ENCODE measurements at regions of chr20 and their contacts with region 1.

Region 1: DNA sequence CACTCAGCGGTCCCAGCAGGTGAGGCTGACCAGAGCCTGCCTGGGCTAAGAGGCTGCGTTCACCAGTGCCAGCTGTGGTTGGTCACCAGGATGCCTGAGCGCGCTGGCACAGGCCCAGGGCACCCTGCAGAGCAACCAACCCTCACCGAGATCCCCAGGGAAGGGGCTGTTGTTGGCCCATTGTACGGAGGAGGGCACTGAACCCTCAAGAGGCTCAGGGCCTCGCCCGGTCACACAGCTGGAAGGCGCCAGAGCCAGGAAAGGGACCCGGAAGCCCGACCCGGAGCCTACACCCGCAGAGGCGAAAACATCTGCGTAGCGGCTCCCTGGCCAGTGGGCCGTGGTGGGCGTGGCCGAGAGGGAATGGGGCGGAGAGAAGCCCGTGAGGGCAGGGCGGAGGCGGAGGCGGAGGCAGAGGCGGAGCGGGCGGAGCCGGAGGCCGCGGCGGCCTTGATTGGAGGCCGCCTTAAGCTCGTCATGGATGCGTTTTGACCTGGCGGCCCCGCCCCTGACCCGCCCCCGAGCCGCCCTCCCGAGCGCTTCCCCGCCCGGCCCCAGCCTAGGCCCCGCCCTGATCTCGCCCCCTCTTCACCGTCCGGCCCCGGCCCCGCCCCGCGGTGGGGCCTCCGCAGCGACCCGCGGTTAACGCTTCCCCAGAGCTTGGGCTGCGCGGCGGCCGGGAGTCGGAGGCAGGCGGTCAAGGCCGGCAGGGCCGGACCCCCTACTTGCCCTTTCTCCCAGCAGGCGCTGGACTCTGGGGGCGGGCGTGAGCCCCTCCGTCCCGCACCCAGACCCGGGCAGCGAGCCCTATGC is 2.2 kb upstream of the MRGBP start:
- DNase-seq: peak; percentile 91 to 99 (median 94)
- H3K4me3 ChIP-seq: peak overlapping the region; percentile 39 to 97 (median 76)
- H3K27ac ChIP-seq: peak overlapping the region; percentile 63 to 98 (median 95)
- H3K27me3 ChIP-seq: no peaks in the 10 kb centered on the region
- CTCF ChIP-seq: peak in 28 of 56 donors; percentile 4 to 62 (median 26)

Region 2: GRCh38 chr20:62065669-62066338 is 728.3 kb before region 1 on chr20 and contains the start of gene TAF4:
- intact Hi-C with region 1: loop called in 1 of 2 experiments (anchors 10 kb)
- DNase-seq: peak in 9 of 10 donors; percentile 44 to 81 (median 75)
- H3K4me3 ChIP-seq: peak within 1 kb of the TSS; percentile 47 to 86 (median 72)
- H3K27ac ChIP-seq: peak within 1 kb of the TSS in 58 of 59 donors; percentile 33 to 94 (median 85)
- H3K27me3 ChIP-seq: no peaks in the 10 kb centered on the region
- CTCF ChIP-seq: no peak
- total RNA-seq, gene TAF4: 13.3 to 38.0 (median 22.2) TPM

Region 3: DNA sequence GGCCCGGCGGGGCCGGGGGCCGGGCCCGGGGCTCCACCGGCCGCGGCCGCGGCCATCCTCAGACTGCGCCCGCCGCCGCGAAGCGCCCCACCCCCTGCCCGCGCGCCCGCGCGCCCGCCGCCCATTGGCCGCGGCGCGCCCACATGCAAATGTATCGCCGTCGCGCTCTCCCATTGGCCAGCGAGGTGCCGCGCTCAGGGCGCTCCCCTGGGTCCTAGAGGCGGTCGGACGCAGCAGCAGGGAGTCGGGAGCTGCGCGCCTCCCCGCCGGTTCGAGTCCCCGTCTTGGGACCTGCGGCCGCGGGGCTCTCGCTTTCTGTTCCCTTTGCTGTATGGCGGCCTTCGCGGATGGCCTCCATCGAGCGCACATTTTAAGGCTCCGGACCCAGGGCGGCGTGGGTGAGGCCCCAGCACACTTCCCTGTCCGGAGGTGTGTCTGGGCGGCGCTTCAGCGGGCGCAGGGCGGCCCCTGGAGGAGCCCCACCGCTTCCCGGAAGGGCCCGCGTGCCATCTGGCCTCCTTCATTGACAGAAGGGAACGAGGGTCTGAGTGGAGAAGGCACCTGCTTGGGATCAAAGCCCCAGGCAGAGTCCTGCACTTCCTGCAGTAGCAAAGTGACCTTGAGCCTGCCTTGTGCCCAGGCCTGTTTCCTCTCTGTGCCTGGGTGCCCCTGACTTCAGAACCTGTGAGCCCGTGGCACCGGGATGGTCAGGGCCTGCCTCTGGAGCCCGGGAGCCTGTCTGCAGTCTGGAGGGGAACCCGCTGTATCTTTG is 386.7 kb before region 1 on chr20 and contains the start of gene CABLES2:
- intact Hi-C with region 1: loop called (anchors 5 kb)
- DNase-seq: peak; percentile 91 to 97 (median 94)
- H3K4me3 ChIP-seq: peak within 1 kb of the TSS; percentile 52 to 85 (median 71)
- H3K27ac ChIP-seq: peak within 1 kb of the TSS in 21 of 59 donors; percentile 2 to 84 (median 35)
- H3K27me3 ChIP-seq: no peaks in the 10 kb centered on the region
- CTCF ChIP-seq: peak in 42 of 56 donors; percentile 6 to 60 (median 35)
- total RNA-seq, gene CABLES2: 7.0 to 18.7 (median 11.9) TPM

Region 4: GRCh38 chr20:62616728-62617621 is 177.1 kb before region 1 on chr20:
- intact Hi-C with region 1: loop called in 1 of 2 experiments (anchors 5 kb)
- DNase-seq: peak in 9 of 10 donors; percentile 42 to 79 (median 64)
- H3K4me3 ChIP-seq: no peak overlapping the region
- H3K27ac ChIP-seq: peak overlapping the region in 30 of 59 donors; percentile 9 to 75 (median 48)
- H3K27me3 ChIP-seq: peaks cover 0 to 7% (median 0%) of the 10 kb centered on the region in 45 donors
- CTCF ChIP-seq: peak; percentile 55 to 90 (median 82)

Region 5: DNA sequence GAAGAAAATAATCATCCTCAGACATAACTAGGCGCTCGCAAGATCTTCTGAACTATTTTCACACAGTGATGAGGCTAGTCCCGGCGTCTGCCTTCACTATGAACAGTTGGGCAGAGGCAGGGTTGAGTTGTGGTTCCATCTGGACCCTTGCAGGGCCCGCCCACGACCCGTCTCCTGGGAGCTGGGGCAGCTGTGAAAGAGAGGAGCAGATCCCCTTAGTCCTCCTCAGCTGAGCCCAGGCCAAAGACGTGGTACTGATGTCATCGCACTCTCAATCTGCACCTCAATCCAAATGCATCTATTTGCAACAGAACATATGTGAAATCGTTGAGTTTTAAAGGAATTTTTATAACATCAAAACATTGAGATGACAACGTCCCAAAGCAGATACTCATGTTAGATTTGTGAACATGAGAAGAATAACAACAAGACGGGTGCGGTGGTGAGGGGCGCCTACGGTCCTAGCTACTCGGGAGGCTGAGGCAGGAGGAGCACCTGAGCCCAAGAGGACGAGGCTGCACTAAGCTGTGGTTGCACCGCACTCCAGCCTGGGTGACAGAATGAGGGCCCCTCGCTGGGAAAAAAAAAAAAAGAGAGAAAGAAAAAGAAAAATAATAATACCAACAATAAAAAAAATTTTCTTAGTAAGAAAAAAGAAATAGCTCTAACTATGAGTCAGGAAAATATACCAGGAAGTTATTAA is 52.2 kb after region 1 on chr20:
- intact Hi-C with region 1: loop called (anchors 2 to 10 kb)
- DNase-seq: peak in 6 of 10 donors; percentile 66 to 86 (median 75)
- H3K4me3 ChIP-seq: no peak overlapping the region
- H3K27ac ChIP-seq: peak overlapping the region in 55 of 59 donors; percentile 1 to 99 (median 79)
- H3K27me3 ChIP-seq: no peaks in the 10 kb centered on the region
- CTCF ChIP-seq: no peak

Measured in dorsolateral prefrontal cortex (tissue), 120 donors.